Breast epithelium (tissue), 4 donors: ENCODE measurements at regions of chr10 and their contacts with region 1.

Region 1: GRCh38 chr10:69888882-69889584 is 87.3 kb downstream of the COL13A1 start:
- DNase-seq: no peak
- H3K4me3 ChIP-seq: no peak overlapping the region
- H3K27ac ChIP-seq: no peak overlapping the region
- H3K4me1 ChIP-seq: no peaks in the 10 kb centered on the region
- H3K27me3 ChIP-seq: no peaks in the 10 kb centered on the region
- CTCF ChIP-seq: no peak
- POLR2A ChIP-seq: no peak

Region 2: GRCh38 chr10:69951658-69952057 is 62.6 kb after region 1 on chr10:
- intact Hi-C with region 1: loop called (anchors 2 kb)
- DNase-seq: no peak
- H3K4me3 ChIP-seq: no peak overlapping the region
- H3K27ac ChIP-seq: no peak overlapping the region
- H3K4me1 ChIP-seq: no peaks in the 10 kb centered on the region
- H3K27me3 ChIP-seq: no peaks in the 10 kb centered on the region
- CTCF ChIP-seq: no peak
- POLR2A ChIP-seq: no peak

Region 3: DNA sequence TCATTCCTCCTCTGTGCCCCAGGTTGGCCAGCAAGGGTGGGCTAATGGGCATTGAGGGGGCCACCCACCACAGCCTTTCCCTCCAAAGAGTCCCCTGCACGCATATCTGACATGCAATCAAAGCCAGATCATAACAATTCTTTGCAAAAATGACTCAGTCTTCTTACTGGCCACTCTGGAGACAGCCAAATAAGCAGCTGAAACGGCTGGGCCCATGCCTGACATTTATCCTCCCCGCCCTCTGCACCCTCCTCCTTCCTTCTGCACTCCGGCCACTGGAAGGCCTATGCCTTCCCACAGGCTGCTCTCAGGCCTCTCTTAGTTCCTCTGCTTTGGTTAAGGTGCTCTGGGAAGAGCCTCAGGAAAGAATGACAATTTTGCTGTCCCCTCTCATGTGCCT is 423.9 kb after region 1 on chr10:
- intact Hi-C with region 1: no loop called
- DNase-seq: no peak
- H3K4me3 ChIP-seq: no peak overlapping the region
- H3K27ac ChIP-seq: peak overlapping the region in 1 of 2 donors; percentile 25
- H3K4me1 ChIP-seq: no peaks in the 10 kb centered on the region
- H3K27me3 ChIP-seq: no peaks in the 10 kb centered on the region
- CTCF ChIP-seq: no peak
- POLR2A ChIP-seq: no peak